WTC11 (cell line): ENCODE measurements at regions of chr22 and their contacts with region 1.

Region 1: DNA sequence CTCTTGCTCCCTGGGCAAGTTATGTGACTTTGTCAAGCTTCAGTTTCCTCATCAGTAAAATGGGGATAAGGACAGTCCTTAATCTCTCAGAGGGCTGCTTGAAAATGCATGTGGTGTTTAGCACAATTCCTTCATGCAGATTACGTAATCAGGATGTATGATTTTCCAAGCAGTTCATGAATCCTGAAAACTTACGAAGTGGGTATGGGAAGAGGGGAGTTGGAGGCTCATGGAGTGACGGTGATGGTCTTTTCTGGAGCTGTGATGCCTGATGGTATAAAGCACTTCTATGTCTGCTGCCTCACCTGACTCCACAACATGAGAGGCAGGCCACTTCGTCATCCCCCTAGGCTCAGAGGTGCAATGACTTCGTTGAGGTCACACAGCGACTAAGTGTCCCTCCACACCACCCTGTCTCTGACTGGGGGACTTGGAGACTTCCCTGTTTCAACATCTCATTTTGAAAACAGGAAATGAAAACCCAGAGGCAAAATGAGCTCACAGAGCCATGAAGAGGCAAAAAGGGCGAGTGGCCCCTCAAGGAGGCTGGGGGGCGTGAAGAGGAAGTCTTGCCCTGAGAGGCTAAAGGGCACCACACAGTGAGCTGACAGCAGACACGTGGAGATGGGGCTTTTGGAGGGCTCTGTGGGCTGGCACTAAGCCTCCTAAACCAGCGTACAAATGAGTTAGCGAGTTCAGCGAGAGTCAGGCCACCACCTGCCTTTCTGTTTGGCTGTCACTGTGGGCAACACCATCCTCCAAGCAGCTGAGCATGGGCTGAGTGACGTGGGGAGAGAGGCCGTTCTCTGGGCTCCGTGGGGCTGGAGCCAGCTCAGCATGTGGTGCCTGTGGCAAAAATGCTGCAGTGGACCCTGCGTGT is 10.1 kb downstream of the MCM5 start:
- DNase-seq: no peak
- ATAC-seq: no peak
- H3K4me3 Mint-ChIP-seq: no peak overlapping the region
- H3K27ac Mint-ChIP-seq: 0 out of 2 replicates have a peak overlapping the region, but pooled peaks have one; percentile 15
- H3K4me1 Mint-ChIP-seq: no peaks in the 10 kb centered on the region
- H3K27me3 Mint-ChIP-seq: no peaks in the 10 kb centered on the region
- CTCF ChIP-seq: no peak

Region 2: GRCh38 chr22:35421121-35421520 is 11.1 kb after region 1 on chr22:
- CTCF ChIA-PET with region 1: no interaction called
- POLR2A ChIA-PET with region 1: interaction called, 12 read pairs
- DNase-seq: peak; percentile 42
- ATAC-seq: peak; percentile 68
- H3K4me3 Mint-ChIP-seq: no peak overlapping the region
- H3K27ac Mint-ChIP-seq: no peak overlapping the region
- H3K4me1 Mint-ChIP-seq: peaks cover 17% of the 10 kb centered on the region
- H3K27me3 Mint-ChIP-seq: no peaks in the 10 kb centered on the region
- CTCF ChIP-seq: no peak

Region 3: DNA sequence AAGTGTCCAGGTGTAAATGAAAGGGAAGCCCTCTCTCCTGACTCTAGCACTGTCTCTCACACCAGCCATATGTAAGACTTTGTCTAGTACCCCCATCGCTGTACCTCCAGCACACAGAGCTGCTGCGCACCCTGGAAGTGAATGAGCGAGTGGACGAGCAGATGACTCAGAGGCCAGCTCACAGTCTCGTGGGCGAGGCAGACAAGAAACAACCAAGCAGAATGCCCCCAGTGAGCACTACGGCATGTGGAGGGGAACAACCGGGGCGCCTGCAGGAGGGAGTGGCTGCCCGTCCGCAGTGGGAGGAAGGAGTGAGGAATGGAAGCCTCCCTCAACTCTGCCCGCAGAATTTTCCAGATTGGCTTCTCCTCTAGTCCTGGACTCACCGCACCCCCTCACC is 36.3 kb after region 1 on chr22:
- CTCF ChIA-PET with region 1: no interaction called
- POLR2A ChIA-PET with region 1: no interaction called
- DNase-seq: no peak
- ATAC-seq: no peak
- H3K4me3 Mint-ChIP-seq: no peak overlapping the region
- H3K27ac Mint-ChIP-seq: no peak overlapping the region
- H3K4me1 Mint-ChIP-seq: peaks cover 37% of the 10 kb centered on the region
- H3K27me3 Mint-ChIP-seq: peaks cover 2% of the 10 kb centered on the region; the same call in 1 of the 2 replicates
- CTCF ChIP-seq: no peak